ENCODE measurements at regions of chr9 and their contacts with region 1.

Region 1: GRCh38 chr9:132546148-132547051 is 36.0 kb upstream of the BARHL1 start:
- DNase-seq: peak; percentile 66
- H3K4me3 ChIP-seq: peak overlapping the region; percentile 33
- H3K27ac ChIP-seq: no peak overlapping the region
- H3K4me1 ChIP-seq: peaks cover 12% of the 10 kb centered on the region
- H3K27me3 ChIP-seq: no peaks in the 10 kb centered on the region
- CTCF ChIP-seq: peak; percentile 71

Region 2: DNA sequence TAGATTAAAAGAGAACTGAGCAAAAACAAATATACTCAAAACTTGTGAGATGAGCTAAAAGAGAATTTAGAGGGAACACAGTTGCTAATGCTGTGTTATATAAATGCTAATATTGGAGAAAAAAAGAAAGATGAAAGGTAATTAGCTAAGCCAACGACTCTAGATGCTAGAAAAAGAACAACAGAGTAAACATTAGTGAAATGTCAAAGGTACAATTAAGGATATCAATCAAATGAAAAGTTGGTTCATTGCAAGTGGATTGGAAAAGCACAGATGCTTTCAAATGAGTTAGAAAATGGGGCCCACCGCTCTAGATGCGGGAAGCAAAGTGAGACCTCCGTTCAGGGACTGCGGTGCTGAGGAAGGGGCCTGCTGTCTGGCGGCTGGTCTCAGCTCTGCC is 18.1 kb after region 1 on chr9:
- CTCF ChIA-PET with region 1: no interaction called
- POLR2A ChIA-PET with region 1: interaction called, 14 read pairs
- intact Hi-C with region 1: no loop called
- DNase-seq: no peak
- H3K4me3 ChIP-seq: no peak overlapping the region
- H3K27ac ChIP-seq: no peak overlapping the region
- H3K4me1 ChIP-seq: no peaks in the 10 kb centered on the region
- H3K27me3 ChIP-seq: peaks cover 88% of the 10 kb centered on the region
- CTCF ChIP-seq: no peak

Region 3: DNA sequence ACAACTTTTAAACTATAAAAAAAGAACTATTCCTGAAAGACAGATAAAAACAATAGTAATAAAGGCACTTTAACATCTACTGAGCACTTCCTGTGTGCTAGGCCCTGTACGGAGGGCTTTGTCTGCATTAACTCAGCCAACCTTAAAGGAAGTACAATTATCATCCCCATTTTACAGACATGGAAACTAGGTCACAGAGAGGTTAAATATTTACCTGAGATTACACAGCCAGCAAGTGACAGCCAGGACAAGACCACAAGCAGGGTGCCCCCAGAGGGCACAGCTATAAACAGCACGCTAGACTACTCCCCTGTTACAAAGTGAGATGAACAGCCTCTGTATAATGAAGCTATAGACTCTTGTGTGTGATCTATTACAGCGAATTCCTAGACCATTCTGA is 97.9 kb after region 1 on chr9:
- CTCF ChIA-PET with region 1: no interaction called
- POLR2A ChIA-PET with region 1: no interaction called
- intact Hi-C with region 1: no loop called
- DNase-seq: no peak
- H3K4me3 ChIP-seq: no peak overlapping the region
- H3K27ac ChIP-seq: no peak overlapping the region
- H3K4me1 ChIP-seq: no peaks in the 10 kb centered on the region
- H3K27me3 ChIP-seq: no peaks in the 10 kb centered on the region
- CTCF ChIP-seq: peak; percentile 32

Measured in A673 (cell line).